Right ventricle myocardium inferior (tissue), 1 donor: ENCODE measurements at regions of chr1 and their contacts with region 1.

Region 1: DNA sequence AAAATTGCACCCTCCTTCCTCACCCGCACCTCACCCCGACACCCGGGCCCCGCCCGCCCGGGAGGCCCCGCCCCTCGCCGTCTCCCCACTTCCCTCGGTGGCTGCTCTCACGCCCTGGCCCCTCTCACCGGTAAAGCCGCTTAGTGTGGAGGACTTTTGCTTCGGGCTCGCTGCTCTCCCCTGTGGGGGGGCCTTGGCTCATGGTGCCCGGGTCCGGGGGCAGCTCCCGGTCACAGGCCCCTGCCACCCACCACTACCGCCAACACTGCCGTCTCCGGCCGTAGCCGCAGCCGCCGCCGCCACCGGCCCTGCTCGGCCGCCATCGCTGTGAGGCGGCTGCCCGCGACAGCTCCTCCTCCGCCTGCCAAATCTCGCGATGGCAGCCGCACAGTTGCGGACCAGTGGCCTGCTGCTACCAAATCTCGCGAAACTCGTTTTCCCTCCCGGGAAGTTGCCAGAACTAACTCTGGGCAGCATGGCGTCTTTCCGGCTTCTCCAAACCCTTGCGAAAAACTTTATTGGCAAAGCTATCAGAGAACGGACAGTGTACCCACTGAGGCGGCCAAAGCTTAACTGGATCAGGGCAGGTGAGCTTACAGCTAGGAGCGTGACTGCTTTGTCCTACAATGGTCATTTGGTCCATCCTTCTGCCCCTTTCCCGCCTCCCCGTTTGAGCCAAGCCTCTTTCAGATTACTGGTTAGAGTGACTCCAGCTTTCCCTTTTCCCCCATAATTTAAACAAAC is at the start of gene SMG5:
- DNase-seq: peak; percentile 98
- ATAC-seq: peak; percentile 94
- total RNA-seq, gene SMG5: 91.6 TPM

Region 2: GRCh38 chr1:155847823-155848529 is 434.7 kb before region 1 on chr1:
- intact Hi-C with region 1: no loop called
- DNase-seq: no peak
- ATAC-seq: no peak

Region 3: DNA sequence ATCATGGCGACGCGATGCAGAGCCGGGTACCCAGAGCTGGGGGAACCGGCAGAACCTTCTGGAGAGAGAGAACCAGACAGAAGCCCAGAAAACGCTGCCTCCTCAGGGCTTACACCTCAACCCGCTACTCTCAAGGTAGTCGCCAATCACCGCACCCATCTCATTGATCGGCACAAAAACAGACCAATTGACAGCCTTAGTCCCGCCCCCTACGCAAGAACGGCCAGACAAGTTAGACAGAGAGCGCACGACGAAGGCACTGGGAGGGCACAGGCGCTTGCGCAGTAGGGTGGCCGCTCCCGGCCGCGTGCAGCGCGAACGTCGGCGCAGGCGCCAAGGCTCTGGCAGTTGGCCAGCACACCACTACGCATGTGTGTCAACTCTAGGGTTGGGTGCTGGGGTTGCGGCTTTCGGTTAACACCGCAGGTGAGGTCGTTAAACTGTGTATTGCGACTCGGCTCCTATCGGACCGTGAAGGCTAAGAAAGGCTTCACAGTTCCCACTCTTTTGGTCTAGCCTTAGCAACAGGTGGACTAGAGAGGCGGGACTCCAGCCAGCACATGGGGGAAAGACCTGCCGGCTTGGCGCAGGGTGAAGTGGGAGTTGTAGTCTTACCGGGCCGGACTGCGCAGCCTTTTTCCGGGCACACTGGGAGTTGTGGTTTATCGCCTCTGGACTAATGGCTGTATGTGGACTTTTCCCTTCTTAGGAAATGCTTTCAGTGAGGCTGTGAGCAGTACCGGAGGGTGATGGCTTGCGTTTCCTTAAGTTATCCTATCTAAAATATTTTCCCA is 55.7 kb after region 1 on chr1 and contains the starts of genes CCT3 and TSACC:
- intact Hi-C with region 1: loop called (anchors 5 kb)
- DNase-seq: peak; percentile 99
- ATAC-seq: peak; percentile 98
- total RNA-seq, gene CCT3: 137 TPM
- total RNA-seq, gene TSACC: not detected